CD4-positive, alpha-beta T cell (primary cell): ENCODE measurements at regions of chr19 and their contacts with region 1.

Region 1: GRCh38 chr19:33771384-33772101 is 25.1 kb upstream of the KCTD15 start:
- DNase-seq: peak; percentile 39 to 77 (median 56)
- ATAC-seq: peak; percentile 72
- H3K4me3 ChIP-seq: no peak overlapping the region
- H3K4me3 Mint-ChIP-seq: no peak overlapping the region
- H3K27ac ChIP-seq: no peak overlapping the region
- H3K27ac Mint-ChIP-seq: no peak overlapping the region
- H3K4me1 ChIP-seq: peaks cover 3% of the 10 kb centered on the region
- H3K4me1 Mint-ChIP-seq: peaks cover 5% of the 10 kb centered on the region
- H3K27me3 ChIP-seq: peaks cover 0 to 6% of the 10 kb centered on the region in 2 experiments
- H3K27me3 Mint-ChIP-seq: peaks cover 41% of the 10 kb centered on the region
- CTCF ChIP-seq: peak; percentile 67

Region 2: DNA sequence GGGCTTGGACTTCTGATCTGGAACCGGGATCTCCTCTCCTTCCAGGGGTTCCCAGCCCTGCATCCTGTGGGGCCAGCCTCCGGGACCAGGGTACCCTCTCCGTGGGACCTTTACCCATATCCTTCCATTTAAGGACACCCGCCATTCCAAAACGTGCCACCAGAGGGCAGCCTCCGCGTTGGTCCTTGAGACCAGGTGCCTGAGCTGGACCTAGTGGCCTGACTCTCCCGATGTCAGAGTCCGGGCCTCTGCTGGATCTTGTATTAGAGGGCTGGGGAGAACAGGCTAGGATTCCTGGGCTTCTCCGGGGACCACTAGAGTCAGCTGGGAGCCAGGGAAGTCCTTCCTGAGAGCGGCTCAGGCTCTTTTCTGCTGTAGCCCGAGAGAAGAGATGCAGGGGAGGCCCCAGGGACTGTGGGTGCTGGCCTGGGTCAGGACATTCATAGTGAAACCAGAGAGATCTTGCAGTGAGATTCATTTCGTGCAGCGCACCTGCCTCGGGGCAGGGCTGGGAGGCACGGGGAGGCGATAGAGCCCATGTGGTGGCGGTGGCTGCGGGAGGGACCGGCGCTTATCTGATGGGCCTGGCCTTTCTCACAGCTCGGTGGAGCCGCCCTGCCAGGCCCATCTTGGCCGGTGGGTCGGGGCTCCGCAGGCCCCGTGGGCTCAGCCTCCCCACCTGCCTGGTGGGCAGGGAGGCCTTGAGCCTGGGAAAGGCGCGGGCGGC is 536.1 kb before region 1 on chr19:
- CTCF ChIA-PET with region 1: no interaction called
- POLR2A ChIA-PET with region 1: no interaction called
- intact Hi-C with region 1: loop called (anchors 2 to 5 kb)
- DNase-seq: peak; percentile 63 to 86 (median 76)
- ATAC-seq: peak; percentile 58
- H3K4me3 ChIP-seq: peak overlapping the region; percentile 51
- H3K4me3 Mint-ChIP-seq: peak overlapping the region; percentile 52
- H3K27ac ChIP-seq: no peak overlapping the region
- H3K27ac Mint-ChIP-seq: no peak overlapping the region
- H3K4me1 ChIP-seq: peaks cover 28% of the 10 kb centered on the region
- H3K4me1 Mint-ChIP-seq: peaks cover 6% of the 10 kb centered on the region
- H3K27me3 ChIP-seq: peaks cover 4 to 6% of the 10 kb centered on the region in 2 experiments
- H3K27me3 Mint-ChIP-seq: peaks cover 22% of the 10 kb centered on the region
- CTCF ChIP-seq: peak; percentile 93

Region 3: GRCh38 chr19:33241530-33242101 is 529.9 kb before region 1 on chr19:
- CTCF ChIA-PET with region 1: no interaction called
- POLR2A ChIA-PET with region 1: no interaction called
- intact Hi-C with region 1: loop called in 1 of 2 experiments (anchors 5 kb)
- DNase-seq: peak in 5 of 14 experiments; percentile 15 to 68 (median 54)
- ATAC-seq: no peak
- H3K4me3 ChIP-seq: no peak overlapping the region
- H3K4me3 Mint-ChIP-seq: no peak overlapping the region
- H3K27ac ChIP-seq: no peak overlapping the region
- H3K27ac Mint-ChIP-seq: no peak overlapping the region
- H3K4me1 ChIP-seq: peaks cover 24% of the 10 kb centered on the region
- H3K4me1 Mint-ChIP-seq: no peaks in the 10 kb centered on the region
- H3K27me3 ChIP-seq: no peaks in the 10 kb centered on the region
- H3K27me3 Mint-ChIP-seq: peaks cover 4% of the 10 kb centered on the region
- CTCF ChIP-seq: peak; percentile 62

Region 4: DNA sequence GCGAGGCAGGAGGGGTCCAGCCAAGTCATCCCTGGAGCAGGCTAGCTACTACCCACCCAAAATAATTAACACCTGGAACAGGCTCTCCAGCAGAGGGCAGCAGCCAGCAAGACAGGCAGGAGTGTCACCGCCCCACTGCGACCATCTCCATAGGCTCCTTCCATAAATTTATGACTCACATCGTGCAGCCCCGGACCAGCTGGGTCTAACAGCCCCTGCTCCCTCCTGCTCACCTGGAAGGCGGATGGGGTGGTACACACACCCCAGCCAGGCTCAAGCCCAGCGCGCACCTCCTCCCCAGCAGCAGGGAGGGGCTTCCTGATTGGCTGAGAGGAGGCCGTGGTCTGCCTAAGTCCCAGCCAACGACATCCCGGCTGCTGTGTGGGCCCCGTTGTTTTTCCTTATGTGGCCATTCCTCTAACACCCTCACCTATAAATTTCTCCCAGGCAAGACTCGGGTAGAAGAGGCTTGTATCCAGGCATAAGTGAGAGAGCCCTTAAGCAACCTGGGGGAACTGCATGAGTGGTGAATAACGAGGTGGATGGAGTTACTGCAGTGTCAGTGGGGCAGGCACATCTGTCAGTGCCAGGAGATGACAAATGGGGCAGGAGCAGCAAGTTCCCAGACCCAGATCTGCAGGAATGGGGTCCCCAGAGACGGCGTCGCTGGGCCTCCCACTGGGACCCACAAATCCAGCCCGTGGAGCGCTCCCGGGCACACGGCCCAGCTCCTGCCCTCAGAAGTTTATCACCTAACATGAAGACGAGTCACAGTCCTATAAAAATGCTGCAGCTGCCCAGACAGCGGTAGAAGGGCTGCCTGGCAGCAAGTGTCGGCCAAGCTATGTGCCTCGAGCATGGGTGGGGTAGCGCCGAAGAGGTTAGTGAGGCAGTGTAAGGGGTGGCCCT is 355.0 kb before region 1 on chr19:
- CTCF ChIA-PET with region 1: interaction called, 10 read pairs
- POLR2A ChIA-PET with region 1: no interaction called
- intact Hi-C with region 1: loop called (anchors 1 kb)
- DNase-seq: peak; percentile 43 to 80 (median 64)
- ATAC-seq: peak; percentile 85
- H3K4me3 ChIP-seq: peak overlapping the region; percentile 42
- H3K4me3 Mint-ChIP-seq: peak overlapping the region; percentile 47
- H3K27ac ChIP-seq: no peak overlapping the region
- H3K27ac Mint-ChIP-seq: no peak overlapping the region
- H3K4me1 ChIP-seq: peaks cover 9% of the 10 kb centered on the region
- H3K4me1 Mint-ChIP-seq: peaks cover 4% of the 10 kb centered on the region
- H3K27me3 ChIP-seq: no peaks in the 10 kb centered on the region
- H3K27me3 Mint-ChIP-seq: no peaks in the 10 kb centered on the region
- CTCF ChIP-seq: peak; percentile 76

Region 5: DNA sequence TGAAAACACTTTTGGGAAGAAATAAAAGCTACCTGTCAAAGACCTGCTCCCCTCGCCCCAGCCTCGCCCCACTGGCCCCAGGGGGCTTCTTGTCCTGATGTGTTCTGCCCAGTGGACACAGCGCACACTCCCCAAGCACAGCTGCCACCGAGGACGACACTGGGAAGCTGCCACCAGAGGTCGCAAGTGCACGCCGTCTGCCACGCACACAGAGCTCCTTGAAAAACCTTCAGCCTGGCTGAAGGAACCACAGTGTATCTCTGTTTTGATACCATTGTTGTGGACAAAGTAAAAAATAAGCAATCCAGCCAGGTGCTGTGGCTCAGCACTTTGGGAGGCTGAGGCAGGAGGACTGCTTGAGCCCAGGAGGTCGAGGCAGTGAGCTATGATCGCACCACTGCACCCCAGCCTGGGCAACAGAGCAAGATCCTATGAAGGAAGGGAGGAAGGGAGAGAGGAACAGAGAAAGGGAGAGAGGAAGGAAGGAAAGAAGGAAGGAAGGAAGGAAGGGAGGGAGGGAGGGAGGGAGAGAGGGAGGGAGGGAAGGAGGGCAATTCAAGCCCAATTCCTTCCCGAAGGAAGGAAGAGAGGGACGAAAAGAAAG is 340.8 kb before region 1 on chr19:
- CTCF ChIA-PET with region 1: interaction called, 4 read pairs
- POLR2A ChIA-PET with region 1: no interaction called
- intact Hi-C with region 1: loop called in 1 of 2 experiments (anchors 1 kb)
- DNase-seq: peak; percentile 46 to 83 (median 58)
- ATAC-seq: peak; percentile 74
- H3K4me3 ChIP-seq: no peak overlapping the region
- H3K4me3 Mint-ChIP-seq: peak overlapping the region; percentile 64
- H3K27ac ChIP-seq: no peak overlapping the region
- H3K27ac Mint-ChIP-seq: peak overlapping the region; percentile 91
- H3K4me1 ChIP-seq: peaks cover 22% of the 10 kb centered on the region
- H3K4me1 Mint-ChIP-seq: peaks cover 19% of the 10 kb centered on the region
- H3K27me3 ChIP-seq: no peaks in the 10 kb centered on the region
- H3K27me3 Mint-ChIP-seq: no peaks in the 10 kb centered on the region
- CTCF ChIP-seq: peak; percentile 70